Activated naive CD4-positive, alpha-beta T cell treated with anti-CD3 and anti-CD28 coated beads for 36 hours (primary cell): ENCODE measurements at regions of chr7 and their contacts with region 1.

Region 1: DNA sequence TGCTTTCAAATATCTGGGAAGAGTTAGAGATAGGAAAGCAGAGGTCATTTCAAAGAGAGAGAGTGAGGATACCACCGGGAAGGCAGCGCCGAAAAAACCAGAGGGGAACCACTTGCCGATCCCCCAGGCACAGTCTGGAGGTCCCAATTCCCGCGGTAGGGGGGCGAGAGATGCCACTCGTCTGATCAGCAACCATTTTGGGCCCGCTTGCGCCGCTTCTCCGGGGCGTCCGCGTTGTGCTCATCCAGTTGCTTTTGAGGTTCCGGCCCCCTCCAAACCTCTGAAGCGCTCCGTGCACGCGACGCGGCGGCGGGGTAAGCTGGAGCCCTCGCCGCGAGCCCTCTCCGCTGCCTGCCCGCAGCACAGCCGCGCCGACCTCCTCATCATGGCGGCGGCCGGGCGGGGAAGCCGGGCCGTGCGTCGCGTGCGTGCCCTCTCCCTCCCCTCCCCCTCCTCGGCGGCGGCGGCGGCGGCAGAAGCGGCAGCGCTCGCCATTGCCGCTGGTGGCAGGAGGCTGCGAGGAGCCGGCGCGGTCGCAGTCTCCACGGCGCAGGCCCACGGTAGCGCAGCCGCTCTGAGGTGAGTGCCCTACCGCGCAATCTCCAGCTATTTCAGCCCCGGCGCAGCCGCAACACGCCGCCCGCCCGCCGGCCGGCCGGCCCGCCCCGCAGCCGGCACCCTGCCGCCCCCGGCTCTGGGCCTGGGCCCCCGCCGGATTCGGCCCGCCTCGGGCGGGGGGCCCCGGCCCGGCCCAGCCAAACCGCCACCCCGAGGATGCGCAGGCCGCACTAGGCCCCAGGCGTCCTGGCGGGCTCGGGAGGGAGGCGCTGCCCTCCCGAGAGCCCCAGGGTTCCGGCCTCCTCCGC is at the start of gene NRF1:
- DNase-seq: peak; percentile 91
- H3K4me3 Mint-ChIP-seq: peak within 1 kb of the TSS; percentile 97
- H3K27ac Mint-ChIP-seq: peak within 1 kb of the TSS; percentile 98
- H3K4me1 Mint-ChIP-seq: peaks cover 56% of the 10 kb centered on the region
- H3K27me3 Mint-ChIP-seq: no peaks in the 10 kb centered on the region
- total RNA-seq, gene NRF1: 18.5 to 21.5 TPM

Region 2: DNA sequence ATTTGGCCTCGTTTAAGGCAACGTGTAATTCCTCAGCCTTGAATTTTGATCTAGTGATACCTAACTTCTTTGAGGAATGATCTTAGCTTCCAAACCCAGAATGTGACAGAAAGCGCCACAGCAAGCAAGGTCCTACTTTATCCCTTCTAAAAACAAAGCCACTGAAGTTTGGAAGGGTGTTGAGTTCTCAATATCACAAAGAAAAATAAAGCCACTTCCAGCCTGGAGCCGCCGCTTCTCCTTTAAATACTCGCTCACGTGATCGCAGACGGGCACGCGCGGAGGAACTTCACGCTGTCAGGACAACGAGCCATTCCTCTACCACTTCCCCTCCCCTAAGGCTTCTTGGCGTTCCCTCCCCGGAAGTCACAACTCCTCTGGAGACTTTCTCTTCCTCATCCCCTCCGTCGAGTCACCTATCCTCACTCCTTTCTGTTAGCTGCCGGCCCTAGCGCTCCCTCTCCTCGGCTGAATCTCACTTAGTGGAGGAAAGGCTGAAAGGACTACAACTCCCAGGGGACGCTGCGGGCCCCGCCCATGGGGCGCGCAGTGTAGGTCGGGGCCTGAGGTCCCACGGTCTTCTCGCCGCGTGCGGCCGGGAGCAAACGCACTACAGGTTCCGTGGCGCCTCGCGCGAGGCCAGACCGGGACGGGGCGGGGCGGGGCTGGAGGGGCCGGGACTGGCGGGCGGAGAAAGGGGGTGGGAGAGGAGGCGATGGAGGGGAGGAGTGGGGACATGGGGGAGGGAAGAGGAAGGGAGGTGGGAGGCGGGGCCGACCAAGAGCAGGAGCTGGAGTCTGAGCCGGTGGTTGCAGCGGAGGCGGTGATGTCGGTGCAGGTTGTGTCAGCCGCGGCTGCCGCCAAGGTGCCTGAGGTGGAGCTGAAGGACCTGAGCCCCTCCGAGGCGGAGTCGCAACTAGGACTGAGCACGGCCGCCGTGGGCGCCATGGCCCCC is 387.0 kb before region 1 on chr7 and contains the start of gene AHCYL2:
- CTCF ChIA-PET with region 1: no interaction called
- intact Hi-C with region 1: loop called (anchors 10 kb)
- DNase-seq: peak; percentile 99
- H3K4me3 Mint-ChIP-seq: peak within 1 kb of the TSS; percentile 88
- H3K27ac Mint-ChIP-seq: peak within 1 kb of the TSS; percentile 90
- H3K4me1 Mint-ChIP-seq: peaks cover 31% of the 10 kb centered on the region
- H3K27me3 Mint-ChIP-seq: no peaks in the 10 kb centered on the region
- total RNA-seq, gene AHCYL2: 29.1 to 30.4 TPM

Region 3: GRCh38 chr7:129401967-129402860 is 209.3 kb before region 1 on chr7:
- CTCF ChIA-PET with region 1: no interaction called
- intact Hi-C with region 1: loop called (anchors 1 kb)
- DNase-seq: peak; percentile 74
- H3K4me3 Mint-ChIP-seq: no peak overlapping the region
- H3K27ac Mint-ChIP-seq: no peak overlapping the region
- H3K4me1 Mint-ChIP-seq: peaks cover 36% of the 10 kb centered on the region
- H3K27me3 Mint-ChIP-seq: no peaks in the 10 kb centered on the region

Region 4: DNA sequence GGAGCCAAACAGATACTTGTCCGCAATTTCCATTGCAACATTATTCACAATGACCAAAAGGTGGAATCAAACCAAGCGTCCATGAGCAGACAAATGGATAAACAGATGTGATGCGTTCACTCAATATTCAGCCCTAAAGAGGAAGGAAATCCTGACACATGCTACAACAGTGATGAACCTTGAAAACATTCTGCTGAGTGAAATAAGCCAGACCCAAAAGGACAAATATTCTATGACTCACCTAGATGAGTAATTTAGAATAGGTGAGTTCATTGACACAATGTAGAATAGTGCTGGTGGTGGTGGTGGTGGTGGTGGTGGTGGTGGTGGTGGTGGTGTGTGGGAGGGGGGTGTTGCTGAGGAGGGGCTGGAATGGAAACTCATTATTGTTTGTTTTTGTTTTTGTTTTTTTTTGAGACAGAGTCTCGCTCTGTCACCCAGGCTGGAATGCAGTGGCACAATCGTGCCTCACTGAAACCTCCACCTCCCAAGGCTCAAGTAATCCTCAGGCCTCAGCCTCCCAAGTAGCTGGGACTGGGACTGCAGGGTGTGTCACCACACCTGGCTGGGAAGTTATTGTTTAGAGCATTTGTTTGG is 80.6 kb before region 1 on chr7:
- CTCF ChIA-PET with region 1: interaction called, 3 read pairs
- intact Hi-C with region 1: loop called (anchors 1 kb)
- DNase-seq: peak; percentile 71
- H3K4me3 Mint-ChIP-seq: no peak overlapping the region
- H3K27ac Mint-ChIP-seq: no peak overlapping the region
- H3K4me1 Mint-ChIP-seq: peaks cover 11% of the 10 kb centered on the region
- H3K27me3 Mint-ChIP-seq: peaks cover 3% of the 10 kb centered on the region

Region 5: GRCh38 chr7:129644634-129645230 is 33.3 kb after region 1 on chr7:
- CTCF ChIA-PET with region 1: interaction called, 14 read pairs
- intact Hi-C with region 1: no loop called
- DNase-seq: no peak
- H3K4me3 Mint-ChIP-seq: no peak overlapping the region
- H3K27ac Mint-ChIP-seq: no peak overlapping the region
- H3K4me1 Mint-ChIP-seq: peaks cover 24% of the 10 kb centered on the region
- H3K27me3 Mint-ChIP-seq: no peaks in the 10 kb centered on the region

Region 6: GRCh38 chr7:129825496-129826267 is 214.2 kb after region 1 on chr7:
- CTCF ChIA-PET with region 1: interaction called, 7 read pairs
- intact Hi-C with region 1: loop called (anchors 1 kb)
- DNase-seq: peak; percentile 89
- H3K4me3 Mint-ChIP-seq: peak overlapping the region; percentile 90
- H3K27ac Mint-ChIP-seq: no peak overlapping the region
- H3K4me1 Mint-ChIP-seq: peaks cover 21% of the 10 kb centered on the region
- H3K27me3 Mint-ChIP-seq: no peaks in the 10 kb centered on the region